Thyroid gland (tissue), 4 donors: ENCODE measurements at regions of chr18 and their contacts with region 1.

Region 1: DNA sequence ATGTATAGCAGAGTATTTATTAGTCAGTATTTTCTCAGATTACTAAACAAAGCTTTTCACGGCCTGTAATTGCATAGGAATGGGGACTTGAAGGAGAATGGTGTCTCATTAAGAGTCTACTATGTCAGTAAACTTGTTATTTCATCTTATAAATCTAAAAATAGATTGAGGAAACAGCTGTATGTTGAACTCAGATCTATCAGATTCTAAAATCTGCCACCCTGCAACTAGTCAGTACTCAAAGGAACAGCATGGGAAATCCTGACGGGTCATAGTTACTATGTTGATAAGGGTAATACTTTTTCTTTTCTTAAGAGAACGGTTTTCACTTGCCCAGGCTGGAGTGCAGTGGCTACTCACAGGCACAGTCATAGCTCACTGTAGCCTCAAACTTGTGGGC is 70.2 kb upstream of the EMILIN2 start:
- DNase-seq: no peak
- H3K4me3 ChIP-seq: no peak overlapping the region
- H3K27ac ChIP-seq: no peak overlapping the region
- H3K4me1 ChIP-seq: no peaks in the 10 kb centered on the region
- H3K27me3 ChIP-seq: no peaks in the 10 kb centered on the region
- CTCF ChIP-seq: no peak
- POLR2A ChIP-seq: no peak

Region 2: DNA sequence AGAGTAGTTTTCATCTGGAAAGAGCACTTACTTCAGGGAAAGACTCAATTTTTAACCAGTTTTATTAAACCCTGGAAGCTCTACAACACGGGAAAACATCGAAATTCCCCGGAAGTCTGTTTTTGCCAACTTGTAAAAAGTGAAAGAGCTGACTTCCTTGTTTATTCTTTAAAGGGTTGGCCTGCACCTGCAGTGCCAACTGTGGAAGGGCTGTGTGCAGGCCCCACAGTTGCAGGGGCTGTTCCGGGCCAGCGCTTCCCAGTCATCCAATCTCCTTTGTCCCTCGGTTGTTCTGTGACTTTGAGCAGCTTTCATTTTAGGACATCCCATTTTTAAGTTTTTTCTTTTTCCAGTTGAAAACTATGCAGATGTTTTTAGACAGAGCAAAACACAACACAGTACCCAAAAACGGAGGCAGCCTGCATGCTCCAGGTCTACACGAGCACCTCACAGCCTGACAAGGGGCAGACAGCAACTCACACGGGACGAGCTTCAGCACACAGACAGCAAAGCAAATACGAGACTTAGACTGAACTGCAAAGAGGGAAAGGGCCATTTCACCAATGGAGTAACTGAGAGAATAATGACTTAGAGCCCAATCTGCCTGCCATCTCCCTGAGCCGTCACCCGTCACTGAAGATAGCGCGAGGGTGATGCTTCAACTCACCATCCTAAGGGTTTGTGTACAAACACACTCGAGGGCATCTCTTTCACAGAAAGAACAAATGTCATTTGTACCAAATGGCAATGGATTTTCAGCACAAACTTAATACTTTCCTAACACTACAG is 140.9 kb after region 1 on chr18:
- intact Hi-C with region 1: loop called (anchors 10 kb)
- DNase-seq: peak; percentile 76 to 87
- H3K4me3 ChIP-seq: no peak overlapping the region
- H3K27ac ChIP-seq: peak overlapping the region; percentile 44 to 74 (median 54)
- H3K4me1 ChIP-seq: peaks cover 14 to 18% of the 10 kb centered on the region in 2 donors
- H3K27me3 ChIP-seq: no peaks in the 10 kb centered on the region
- CTCF ChIP-seq: no peak
- POLR2A ChIP-seq: no peak

Region 3: DNA sequence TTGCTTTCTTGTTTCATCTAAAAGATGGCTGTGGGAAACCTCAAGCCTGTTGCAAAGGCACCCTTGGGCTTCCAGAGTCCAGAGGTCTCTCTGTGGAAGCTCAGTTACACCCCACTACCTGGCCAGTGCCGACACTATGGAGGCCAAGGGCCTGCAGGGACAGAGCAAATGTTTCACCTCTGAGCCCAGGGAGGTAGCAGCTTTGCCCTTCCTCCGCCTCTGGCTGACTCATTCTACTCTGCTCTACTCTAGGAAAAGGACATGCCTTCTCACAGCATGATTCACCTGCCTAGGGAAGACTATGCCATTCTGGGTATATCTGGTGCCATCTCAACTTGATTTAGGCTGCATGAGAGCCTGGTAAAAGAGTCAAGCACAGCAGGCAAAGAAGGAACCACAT is 431.0 kb after region 1 on chr18:
- intact Hi-C with region 1: no loop called
- DNase-seq: no peak
- H3K4me3 ChIP-seq: no peak overlapping the region
- H3K27ac ChIP-seq: no peak overlapping the region
- H3K4me1 ChIP-seq: peaks cover 0 to 8% of the 10 kb centered on the region in 2 donors
- H3K27me3 ChIP-seq: no peaks in the 10 kb centered on the region
- CTCF ChIP-seq: no peak
- POLR2A ChIP-seq: no peak